GM12878 (cell line): ENCODE measurements at regions of chr12 and their contacts with region 1.

Region 1: GRCh38 chr12:40561395-40561966 is 130.8 kb upstream of the CNTN1 start:
- DNase-seq: no peak
- ATAC-seq: peak; percentile 74
- H3K4me3 ChIP-seq: peak overlapping the region; percentile 6; the same call in 1 of the 2 replicates
- H3K27ac ChIP-seq: peak overlapping the region; percentile 83
- H3K4me1 ChIP-seq: peaks cover 13% of the 10 kb centered on the region
- H3K27me3 ChIP-seq: no peaks in the 10 kb centered on the region
- CTCF ChIP-seq: no peak
- EP300 ChIP-seq: no peak
- POLR2A ChIP-seq: no peak
- RAD21 ChIP-seq: no peak

Region 2: DNA sequence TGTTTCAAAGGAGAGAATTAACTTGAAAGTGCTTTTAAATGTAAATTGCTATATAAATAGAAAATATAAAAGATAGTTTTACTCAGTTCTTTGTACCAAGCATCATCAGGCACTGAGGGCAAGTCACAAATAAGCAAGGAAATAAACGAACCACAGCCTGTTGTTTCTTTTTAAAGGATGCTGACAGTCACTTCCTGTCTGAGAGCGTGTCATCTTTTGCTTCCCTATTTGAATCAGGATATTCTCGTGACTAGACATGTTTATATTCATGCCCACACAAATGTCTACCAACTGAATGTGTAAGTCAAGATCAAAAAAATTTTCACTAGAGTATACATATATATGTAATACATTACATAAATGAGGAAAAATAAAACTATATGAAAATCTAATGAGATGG is 424.2 kb before region 1 on chr12:
- CTCF ChIA-PET with region 1: no interaction called
- POLR2A ChIA-PET with region 1: no interaction called
- RAD21 ChIA-PET with region 1: no interaction called
- SMC1A ChIA-PET with region 1: no interaction called
- in situ Hi-C with region 1: no loop called
- intact Hi-C with region 1: no loop called
- DNase-seq: no peak
- ATAC-seq: peak; percentile 76
- H3K4me3 ChIP-seq: no peak overlapping the region
- H3K27ac ChIP-seq: no peak overlapping the region
- H3K4me1 ChIP-seq: no peaks in the 10 kb centered on the region
- H3K27me3 ChIP-seq: no peaks in the 10 kb centered on the region; a peak in 1 of 4 replicates
- CTCF ChIP-seq: no peak
- EP300 ChIP-seq: no peak; a peak in 1 of 4 replicates
- POLR2A ChIP-seq: no peak
- RAD21 ChIP-seq: no peak

Region 3: GRCh38 chr12:40515041-40515816 is 46.3 kb before region 1 on chr12:
- CTCF ChIA-PET with region 1: interaction called, 4 read pairs
- POLR2A ChIA-PET with region 1: interaction called, 7 read pairs
- RAD21 ChIA-PET with region 1: interaction called, 9 read pairs
- SMC1A ChIA-PET with region 1: interaction called, 12 read pairs
- in situ Hi-C with region 1: no loop called
- intact Hi-C with region 1: no loop called
- DNase-seq: no peak
- ATAC-seq: peak; percentile 85
- H3K4me3 ChIP-seq: no peak overlapping the region
- H3K27ac ChIP-seq: no peak overlapping the region
- H3K4me1 ChIP-seq: peaks cover 12% of the 10 kb centered on the region; the same call in 1 of the 2 replicates
- H3K27me3 ChIP-seq: no peaks in the 10 kb centered on the region
- CTCF ChIP-seq: no peak
- EP300 ChIP-seq: no peak
- POLR2A ChIP-seq: no peak
- RAD21 ChIP-seq: 0 out of 2 replicates have a peak, but pooled peaks have one; percentile 3

Region 4: DNA sequence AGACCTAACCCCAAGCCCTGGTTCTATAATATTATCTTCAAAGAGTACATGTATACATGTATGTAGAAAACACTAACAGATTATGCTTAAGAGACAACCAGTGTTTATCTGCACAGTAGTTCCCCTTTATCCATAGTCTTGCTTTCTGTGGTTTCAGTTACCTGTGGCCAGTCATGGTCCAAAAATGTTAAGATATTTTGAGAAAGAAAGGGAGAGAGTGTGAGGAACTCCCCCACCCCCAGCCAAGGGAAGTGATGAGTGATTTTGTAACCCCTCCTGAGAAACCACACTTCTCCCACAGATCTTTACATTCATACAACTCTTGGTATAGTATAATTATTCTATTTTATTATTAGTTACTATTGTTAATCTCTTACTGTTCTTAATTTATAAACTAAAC is 53.4 kb after region 1 on chr12:
- CTCF ChIA-PET with region 1: interaction called, 5 read pairs
- POLR2A ChIA-PET with region 1: no interaction called
- RAD21 ChIA-PET with region 1: interaction called, 6 read pairs
- SMC1A ChIA-PET with region 1: interaction called, 28 read pairs
- in situ Hi-C with region 1: no loop called
- intact Hi-C with region 1: no loop called
- DNase-seq: peak; percentile 11
- ATAC-seq: peak; percentile 86
- H3K4me3 ChIP-seq: no peak overlapping the region
- H3K27ac ChIP-seq: no peak overlapping the region
- H3K4me1 ChIP-seq: peaks cover 7% of the 10 kb centered on the region
- H3K27me3 ChIP-seq: no peaks in the 10 kb centered on the region
- CTCF ChIP-seq: no peak
- EP300 ChIP-seq: 0 out of 4 replicates have a peak, but pooled peaks of 1 of the 2 experiments have one; percentile 18
- POLR2A ChIP-seq: no peak
- RAD21 ChIP-seq: 0 out of 2 replicates have a peak, but pooled peaks have one; percentile 9

Region 5: DNA sequence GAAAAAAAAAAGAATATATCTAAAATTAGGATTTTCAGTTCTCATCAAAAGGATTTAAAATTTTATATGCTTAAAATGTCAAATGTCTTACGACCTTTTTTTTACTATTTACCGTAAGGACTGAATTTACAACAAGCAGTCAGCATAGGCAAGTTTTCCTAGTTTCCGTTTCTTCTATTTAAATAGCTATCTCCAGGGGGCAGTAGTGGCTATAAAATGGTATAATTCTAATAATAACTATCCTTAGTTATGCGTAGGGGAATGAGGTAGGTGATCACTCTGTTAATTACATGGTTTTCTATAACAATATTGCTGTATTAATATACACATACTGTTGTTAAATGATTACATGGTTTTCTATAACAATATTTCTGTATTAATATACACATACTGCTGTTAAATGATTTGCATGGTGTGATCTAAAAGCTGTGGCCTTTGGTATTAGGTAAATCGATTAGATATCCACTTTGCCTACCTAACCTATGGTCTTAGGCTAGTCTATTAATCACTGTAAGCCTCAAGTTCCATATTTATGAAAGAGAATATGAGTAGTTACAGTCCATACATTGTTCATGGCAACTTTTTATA is 408.9 kb after region 1 on chr12:
- CTCF ChIA-PET with region 1: no interaction called
- POLR2A ChIA-PET with region 1: no interaction called
- RAD21 ChIA-PET with region 1: no interaction called
- SMC1A ChIA-PET with region 1: no interaction called
- in situ Hi-C with region 1: no loop called
- intact Hi-C with region 1: no loop called
- DNase-seq: no peak
- ATAC-seq: no peak
- H3K4me3 ChIP-seq: no peak overlapping the region
- H3K27ac ChIP-seq: no peak overlapping the region
- H3K4me1 ChIP-seq: no peaks in the 10 kb centered on the region
- H3K27me3 ChIP-seq: no peaks in the 10 kb centered on the region
- CTCF ChIP-seq: no peak; a peak in 1 of 6 replicates
- EP300 ChIP-seq: no peak
- POLR2A ChIP-seq: no peak
- RAD21 ChIP-seq: peak; percentile 24; the same call in 1 of the 2 replicates